ENCODE measurements at regions of chr6 and their contacts with region 1.

Region 1: GRCh38 chr6:31901953-31902643 is at the start of gene ZBTB12:
- DNase-seq: peak; percentile 98
- ATAC-seq: peak; percentile 78
- H3K4me3 ChIP-seq: peak within 1 kb of the TSS; percentile 58
- H3K27ac ChIP-seq: peak within 1 kb of the TSS; percentile 69
- H3K4me1 ChIP-seq: peaks cover 10% of the 10 kb centered on the region
- H3K27me3 ChIP-seq: no peaks in the 10 kb centered on the region
- CTCF ChIP-seq: peak; percentile 13; the same call in 1 of the 2 replicates
- POLR2A ChIP-seq: no peak
- RAD21 ChIP-seq: peak; percentile 71
- total RNA-seq, gene ZBTB12: 2.0 and 2.5 TPM in 2 replicates

Region 2: DNA sequence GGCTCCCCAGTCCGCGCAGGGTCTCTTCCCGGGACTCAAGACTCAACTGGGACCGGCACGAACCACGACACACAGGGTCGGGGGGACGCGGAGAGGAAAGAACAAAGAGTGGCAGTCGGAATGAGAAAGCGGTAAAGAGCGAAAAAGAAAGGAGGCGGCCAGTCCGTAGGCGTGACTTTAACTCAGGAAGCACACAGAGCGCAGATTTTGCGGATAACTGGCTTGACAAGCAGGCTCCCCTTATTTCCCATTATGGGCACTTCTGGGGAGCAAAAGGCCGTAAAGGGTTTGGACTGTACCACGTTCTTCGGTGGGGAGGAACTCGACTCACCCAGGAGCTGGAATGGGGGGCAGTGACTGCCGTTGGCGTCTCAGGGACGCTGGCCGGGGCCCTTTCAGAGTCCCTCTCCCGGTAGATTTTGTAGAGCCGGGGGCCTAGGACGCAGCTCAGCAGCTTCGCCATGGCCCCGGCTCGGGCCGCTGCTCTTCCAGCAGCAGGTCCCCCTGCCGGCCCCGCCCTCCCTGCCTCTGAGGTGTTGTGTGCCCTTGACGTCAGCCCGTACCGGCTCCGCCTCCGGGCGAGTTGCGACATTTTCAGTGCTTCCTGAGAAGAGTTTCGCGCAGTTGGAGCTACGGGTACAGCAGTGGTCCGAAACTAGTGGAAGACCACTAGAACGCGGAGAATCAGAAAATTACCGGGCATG is 199.1 kb before region 1 on chr6 and contains the start of gene ABHD16A:
- CTCF ChIA-PET with region 1: no interaction called
- POLR2A ChIA-PET with region 1: no interaction called
- dilution Hi-C with region 1: no loop called
- in situ Hi-C with region 1: no loop called
- intact Hi-C with region 1: no loop called
- DNase-seq: peak; percentile 98
- ATAC-seq: peak; percentile 94
- H3K4me3 ChIP-seq: peak within 1 kb of the TSS; percentile 67
- H3K27ac ChIP-seq: peak within 1 kb of the TSS; percentile 82
- H3K4me1 ChIP-seq: peaks cover 6% of the 10 kb centered on the region
- H3K27me3 ChIP-seq: no peaks in the 10 kb centered on the region
- CTCF ChIP-seq: no peak
- POLR2A ChIP-seq: peak; percentile 91
- RAD21 ChIP-seq: no peak
- total RNA-seq, gene ABHD16A: 30.3 and 35.1 TPM in 2 replicates

Region 3: DNA sequence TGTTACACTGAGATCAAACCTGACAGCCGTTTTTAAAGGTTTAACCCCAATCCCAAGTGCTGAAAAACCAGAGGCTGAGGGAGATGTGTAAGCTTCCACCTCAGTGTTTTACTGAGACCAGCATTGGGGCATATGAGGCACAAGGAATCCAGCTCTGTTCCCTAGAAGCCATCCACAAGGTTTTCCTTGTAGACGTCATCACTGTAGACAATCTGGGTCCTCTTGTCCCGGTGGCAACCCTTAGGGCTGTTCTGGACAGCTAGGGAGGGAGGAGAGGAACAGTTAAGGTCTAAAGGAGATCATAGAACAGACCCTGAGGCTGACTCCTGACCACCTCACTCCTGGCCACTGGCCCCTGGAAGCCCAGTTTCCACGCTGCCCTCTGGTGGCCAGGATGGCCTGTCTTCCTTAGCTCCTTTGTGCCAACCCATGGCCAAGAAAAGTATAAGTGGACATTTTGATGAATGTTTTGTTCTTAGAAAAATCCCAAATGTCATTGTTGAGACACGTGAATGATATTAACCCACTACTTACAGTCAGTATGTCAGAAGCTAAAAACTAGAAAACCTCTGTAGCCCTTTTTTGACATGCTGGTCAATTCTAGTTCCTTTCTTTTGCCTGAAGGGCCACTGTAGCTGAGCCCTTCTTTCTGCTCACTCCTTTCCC is 50.2 kb after region 1 on chr6:
- CTCF ChIA-PET with region 1: interaction called, 10 read pairs
- POLR2A ChIA-PET with region 1: interaction called, 3 read pairs
- dilution Hi-C with region 1: no loop called
- in situ Hi-C with region 1: no loop called
- intact Hi-C with region 1: loop called (anchors 1 kb)
- DNase-seq: peak; percentile 63
- ATAC-seq: peak; percentile 96
- H3K4me3 ChIP-seq: no peak overlapping the region
- H3K27ac ChIP-seq: no peak overlapping the region
- H3K4me1 ChIP-seq: peaks cover 6% of the 10 kb centered on the region
- H3K27me3 ChIP-seq: no peaks in the 10 kb centered on the region
- CTCF ChIP-seq: peak; percentile 84
- POLR2A ChIP-seq: no peak
- RAD21 ChIP-seq: peak; percentile 83